ENCODE measurements at regions of chr21 and their contacts with region 1.

Region 1: GRCh38 chr21:31088315-31088714 is 50.0 kb upstream of the KRTAP19-8 start:
- DNase-seq: no peak
- H3K4me3 ChIP-seq: no peak overlapping the region
- H3K27ac ChIP-seq: no peak overlapping the region
- H3K4me1 ChIP-seq: no peaks in the 10 kb centered on the region
- H3K27me3 ChIP-seq: no peaks in the 10 kb centered on the region
- CTCF ChIP-seq: no peak
- POLR2A ChIP-seq: no peak

Region 2: GRCh38 chr21:30044445-30045064 is 1043.8 kb before region 1 on chr21:
- intact Hi-C with region 1: loop called (anchors 5 kb)
- DNase-seq: no peak
- H3K4me3 ChIP-seq: no peak overlapping the region
- H3K27ac ChIP-seq: no peak overlapping the region
- H3K4me1 ChIP-seq: no peaks in the 10 kb centered on the region
- H3K27me3 ChIP-seq: no peaks in the 10 kb centered on the region
- CTCF ChIP-seq: peak; percentile 58 to 84 (median 71)
- POLR2A ChIP-seq: no peak

Region 3: GRCh38 chr21:30340441-30341241 is 747.7 kb before region 1 on chr21:
- intact Hi-C with region 1: loop called (anchors 5 kb)
- DNase-seq: peak; percentile 15
- H3K4me3 ChIP-seq: no peak overlapping the region
- H3K27ac ChIP-seq: no peak overlapping the region
- H3K4me1 ChIP-seq: no peaks in the 10 kb centered on the region
- H3K27me3 ChIP-seq: no peaks in the 10 kb centered on the region
- CTCF ChIP-seq: peak; percentile 62 to 77 (median 70)
- POLR2A ChIP-seq: no peak

Measured in prostate gland (tissue), 2 donors.